Motor neuron (in vitro differentiated cells): ENCODE measurements at regions of chr9 and their contacts with region 1.

Region 1: GRCh38 chr9:36023260-36024048 is 13.3 kb upstream of the RECK start:
- ATAC-seq: peak; percentile 40 to 93 (median 70)
- H3K4me3 ChIP-seq: no peak overlapping the region
- H3K27ac ChIP-seq: no peak overlapping the region
- H3K4me1 ChIP-seq: no peaks in the 10 kb centered on the region

Region 2: DNA sequence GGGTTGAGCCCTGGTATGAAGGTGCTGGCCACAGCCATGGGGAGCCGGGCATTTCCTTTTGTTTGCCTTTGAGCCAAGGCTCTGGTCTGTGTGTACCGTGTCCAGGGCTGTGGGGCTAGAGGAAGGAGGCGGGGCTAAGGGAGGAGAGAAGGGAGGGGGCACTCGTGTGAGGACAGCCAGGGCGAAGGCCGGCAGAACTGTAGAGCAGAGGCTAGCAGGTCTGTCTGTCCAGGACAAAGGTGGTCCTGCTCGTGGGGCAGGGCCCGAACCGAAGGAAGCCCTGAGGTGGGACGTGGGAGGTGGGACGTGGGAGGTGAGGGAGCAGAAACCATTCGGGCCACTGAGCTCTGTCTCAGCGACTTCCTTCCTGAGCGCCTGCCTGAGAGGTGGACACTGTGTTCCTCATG is 459.7 kb before region 1 on chr9:
- in situ Hi-C with region 1: no loop called
- ATAC-seq: peak in 7 of 8 experiments; percentile 27 to 93 (median 85)
- H3K4me3 ChIP-seq: no peak overlapping the region
- H3K27ac ChIP-seq: no peak overlapping the region
- H3K4me1 ChIP-seq: peaks cover 4 to 5% of the 10 kb centered on the region in 2 donors

Region 3: GRCh38 chr9:35657546-35658136 is 365.8 kb before region 1 on chr9 and contains the start of gene RMRP:
- in situ Hi-C with region 1: no loop called
- ATAC-seq: peak; percentile 93 to 94 (median 93)
- H3K4me3 ChIP-seq: peak within 1 kb of the TSS; percentile 73 to 87 (median 79)
- H3K27ac ChIP-seq: peak within 1 kb of the TSS; percentile 99 to 100
- H3K4me1 ChIP-seq: peaks cover 16% of the 10 kb centered on the region in 2 donors
- total RNA-seq, gene RMRP: 12,611 to 65,418 (median 21,607) TPM

Region 4: GRCh38 chr9:35903049-35903448 is 120.4 kb before region 1 on chr9:
- in situ Hi-C with region 1: loop called in 1 of 9 experiments (anchors 10 kb)
- ATAC-seq: peak in 1 of 8 experiments; percentile 16
- H3K4me3 ChIP-seq: no peak overlapping the region
- H3K27ac ChIP-seq: no peak overlapping the region
- H3K4me1 ChIP-seq: peaks cover 9 to 16% of the 10 kb centered on the region in 2 donors

Region 5: DNA sequence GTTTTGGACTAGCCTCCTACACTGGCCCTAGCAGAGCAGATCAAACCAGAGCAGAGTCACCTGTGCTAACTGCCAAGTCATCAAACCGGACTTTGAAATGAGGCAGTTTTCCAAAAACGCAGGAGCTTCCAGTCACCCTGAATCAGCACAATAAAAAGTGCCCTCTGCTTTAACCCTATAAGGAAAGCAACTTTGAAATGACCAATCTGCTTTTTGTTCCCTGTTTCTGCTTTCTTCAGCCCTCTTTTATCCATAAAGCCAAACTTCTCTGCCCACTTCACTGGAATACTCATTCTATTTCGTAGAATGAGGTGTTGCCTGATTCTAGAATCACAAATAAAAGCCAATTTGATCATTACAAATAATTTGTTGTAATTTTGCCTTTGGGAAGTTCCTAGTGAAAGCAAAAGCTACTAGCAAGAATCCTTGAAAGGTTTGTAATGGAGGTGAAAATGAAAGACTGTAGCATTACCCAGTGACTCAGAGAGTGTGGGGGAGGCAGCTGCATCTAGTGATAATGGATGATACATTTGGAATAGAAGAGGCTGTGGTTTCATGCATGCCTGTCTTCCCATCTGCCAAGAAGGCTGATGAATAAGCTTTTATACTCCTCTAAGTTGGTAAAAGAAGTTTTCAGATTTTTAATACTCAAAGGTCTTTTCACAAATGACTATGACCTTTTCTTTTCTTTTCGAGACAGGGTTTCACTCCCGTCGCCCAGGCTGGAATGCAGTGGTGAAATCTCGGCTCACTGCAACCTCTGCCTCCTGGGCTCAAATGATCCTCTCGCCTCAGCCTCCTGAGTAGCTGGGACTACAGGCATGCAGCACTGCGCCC is 99.3 kb before region 1 on chr9:
- in situ Hi-C with region 1: no loop called
- ATAC-seq: peak; percentile 43 to 98 (median 80)
- H3K4me3 ChIP-seq: no peak overlapping the region
- H3K27ac ChIP-seq: no peak overlapping the region
- H3K4me1 ChIP-seq: peaks cover 2 to 10% of the 10 kb centered on the region in 2 donors

Region 6: GRCh38 chr9:35954942-35955546 is 68.4 kb before region 1 on chr9:
- in situ Hi-C with region 1: loop called in 2 of 9 experiments (anchors 10 kb)
- ATAC-seq: peak; percentile 60 to 96 (median 82)
- H3K4me3 ChIP-seq: no peak overlapping the region
- H3K27ac ChIP-seq: no peak overlapping the region
- H3K4me1 ChIP-seq: no peaks in the 10 kb centered on the region

Region 7: DNA sequence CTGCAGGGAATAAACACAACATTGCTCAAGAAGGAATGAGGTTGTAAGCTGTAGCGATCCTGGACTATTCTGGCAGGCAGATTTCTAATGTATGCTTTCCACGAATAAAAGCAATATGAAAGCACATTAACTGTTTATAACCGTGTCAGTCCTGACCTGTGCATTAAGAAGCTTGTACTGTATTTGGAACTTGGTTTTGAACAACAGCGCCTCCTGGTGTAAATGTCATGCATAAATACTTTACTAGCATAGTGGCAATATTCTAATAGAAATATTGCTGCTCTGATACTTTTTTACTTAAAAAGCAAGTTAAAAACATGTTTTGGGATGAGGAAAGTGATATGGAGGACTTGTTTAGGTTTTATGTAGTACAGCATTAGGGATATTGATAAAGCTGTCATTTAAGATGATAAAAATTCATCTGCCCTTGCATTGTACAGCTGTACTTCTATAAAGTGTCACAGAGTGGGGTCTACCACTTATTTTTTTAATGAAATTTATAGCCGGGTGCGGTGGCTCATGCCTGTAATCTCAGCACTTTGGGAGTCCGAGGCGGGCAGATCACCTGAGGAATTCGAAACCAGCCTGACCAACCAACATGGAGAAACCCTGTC is 305.5 kb after region 1 on chr9:
- in situ Hi-C with region 1: no loop called
- ATAC-seq: peak in 7 of 8 experiments; percentile 45 to 84 (median 67)
- H3K4me3 ChIP-seq: no peak overlapping the region
- H3K27ac ChIP-seq: no peak overlapping the region
- H3K4me1 ChIP-seq: no peaks in the 10 kb centered on the region